Caco-2 (cell line): ENCODE measurements at regions of chr10 and their contacts with region 1.

Region 1: GRCh38 chr10:77173615-77174461 is 463.8 kb downstream of the KCNMA1 start:
- DNase-seq: peak; percentile 75 to 87
- H3K4me3 ChIP-seq: no peak overlapping the region
- H3K4me3 Mint-ChIP-seq: no peak overlapping the region
- H3K27ac Mint-ChIP-seq: no peak overlapping the region
- H3K4me1 ChIP-seq: no peaks in the 10 kb centered on the region
- H3K4me1 Mint-ChIP-seq: no peaks in the 10 kb centered on the region
- H3K27me3 ChIP-seq: no peaks in the 10 kb centered on the region
- H3K27me3 Mint-ChIP-seq: no peaks in the 10 kb centered on the region
- CTCF ChIP-seq: peak; percentile 84 to 94

Region 2: DNA sequence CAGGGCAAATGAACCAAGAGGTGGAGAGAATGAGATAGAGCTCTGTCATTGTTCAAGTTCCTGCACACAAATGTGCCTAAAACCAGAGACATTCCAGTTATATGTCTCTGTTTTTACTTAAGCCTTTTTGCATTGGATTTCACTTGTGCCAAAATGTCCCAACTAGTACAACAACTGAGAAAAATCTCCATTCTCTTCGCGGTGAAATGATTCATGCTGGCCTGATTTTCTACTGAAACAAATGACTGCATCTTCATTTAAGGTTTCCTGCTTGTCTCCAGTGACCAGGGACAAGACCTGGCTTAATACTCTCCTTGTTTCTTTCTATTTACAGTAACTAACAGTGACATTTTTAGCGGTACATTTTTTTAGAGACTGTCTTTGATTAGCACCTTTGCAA is 251.2 kb before region 1 on chr10:
- CTCF ChIA-PET with region 1: no interaction called
- POLR2A ChIA-PET with region 1: no interaction called
- intact Hi-C with region 1: no loop called
- DNase-seq: no peak
- H3K4me3 ChIP-seq: no peak overlapping the region
- H3K4me3 Mint-ChIP-seq: no peak overlapping the region
- H3K27ac Mint-ChIP-seq: no peak overlapping the region
- H3K4me1 ChIP-seq: no peaks in the 10 kb centered on the region
- H3K4me1 Mint-ChIP-seq: no peaks in the 10 kb centered on the region
- H3K27me3 ChIP-seq: no peaks in the 10 kb centered on the region; the same call in 1 of the 2 replicates
- H3K27me3 Mint-ChIP-seq: peaks cover 3% of the 10 kb centered on the region
- CTCF ChIP-seq: no peak

Region 3: DNA sequence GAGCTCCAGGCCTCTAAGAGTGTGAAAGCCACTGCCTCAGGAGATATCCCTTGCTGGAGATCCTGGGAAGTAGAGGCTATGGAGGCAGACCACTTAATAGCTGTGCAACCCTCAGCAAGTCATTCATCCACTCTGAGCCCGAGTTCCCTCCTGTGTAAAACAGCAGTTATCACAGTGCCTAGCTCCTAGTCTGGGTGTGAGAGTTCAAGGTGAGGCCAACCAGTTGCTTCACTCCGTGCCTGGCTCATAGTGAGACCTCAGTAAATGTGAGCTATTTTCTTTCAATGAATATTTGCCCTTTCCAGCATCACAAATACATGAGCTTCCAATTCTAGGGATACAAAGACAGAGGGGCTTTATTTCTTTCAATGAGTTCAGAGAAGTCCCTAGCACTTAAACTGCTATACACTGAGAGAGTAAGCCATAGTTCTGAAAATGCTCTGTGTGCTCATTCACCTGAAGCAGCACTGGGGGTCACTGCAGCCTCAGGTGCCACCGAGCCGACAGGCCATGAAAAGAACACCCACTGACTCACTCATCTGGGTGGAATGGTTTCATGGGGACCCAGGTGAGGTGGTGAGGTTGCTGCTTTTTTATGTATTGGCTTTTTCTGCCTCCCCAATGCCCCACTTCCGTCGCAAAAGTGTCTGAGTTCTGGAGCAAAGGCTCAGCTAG is 204.0 kb after region 1 on chr10:
- CTCF ChIA-PET with region 1: no interaction called
- POLR2A ChIA-PET with region 1: no interaction called
- intact Hi-C with region 1: loop called (anchors 2 kb)
- DNase-seq: peak; percentile 56 to 64
- H3K4me3 ChIP-seq: no peak overlapping the region
- H3K4me3 Mint-ChIP-seq: no peak overlapping the region
- H3K27ac Mint-ChIP-seq: peak overlapping the region; percentile 9
- H3K4me1 ChIP-seq: peaks cover 16% of the 10 kb centered on the region
- H3K4me1 Mint-ChIP-seq: no peaks in the 10 kb centered on the region
- H3K27me3 ChIP-seq: no peaks in the 10 kb centered on the region
- H3K27me3 Mint-ChIP-seq: no peaks in the 10 kb centered on the region
- CTCF ChIP-seq: peak; percentile 43 to 69